Thyroid gland (tissue), 4 donors: ENCODE measurements at regions of chrX and their contacts with region 1.

Region 1: DNA sequence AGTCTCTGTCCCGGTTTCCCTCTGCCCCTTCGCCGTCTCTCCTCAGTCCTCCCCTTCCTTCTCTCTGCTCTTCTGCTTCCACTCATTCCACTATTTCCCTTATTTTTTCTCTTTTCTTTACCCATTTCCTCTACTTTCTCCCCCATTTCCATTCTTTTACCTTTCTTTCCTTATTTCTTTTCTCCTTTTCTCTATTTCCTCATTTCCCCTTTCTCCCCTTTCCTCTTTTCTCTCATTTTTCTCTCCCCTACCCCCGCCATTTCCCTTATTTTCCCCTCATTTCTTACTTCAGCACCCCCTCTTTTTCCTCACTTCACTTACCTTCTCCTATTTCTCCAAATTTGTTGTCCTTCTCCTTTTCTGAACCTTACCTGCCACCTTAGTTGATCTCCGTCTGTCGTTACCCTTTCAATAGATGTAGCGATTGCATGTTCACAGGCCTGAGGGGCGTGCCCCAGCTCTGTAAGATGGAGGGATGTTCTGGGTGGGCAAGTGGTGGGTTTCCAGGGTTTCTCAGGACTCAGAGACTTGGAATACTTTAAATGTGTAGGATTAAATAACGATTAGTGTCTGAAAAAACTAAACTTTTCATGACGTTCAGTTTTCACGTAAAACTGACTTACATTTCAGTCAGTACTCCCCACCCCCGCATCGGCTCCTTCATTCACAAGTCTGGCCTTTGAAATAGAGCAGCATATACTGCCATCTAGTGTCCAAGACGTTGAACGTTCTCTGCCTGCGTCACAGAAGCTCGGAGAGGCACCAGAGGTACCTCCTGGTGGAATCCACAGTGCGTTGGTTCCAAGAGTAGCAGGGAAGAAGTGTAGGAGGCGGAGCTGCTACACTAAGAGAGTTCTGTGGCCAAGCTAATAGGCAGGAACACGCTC is 641 bp upstream of the NCBP2L start:
- DNase-seq: peak; percentile 88 to 91
- H3K4me3 ChIP-seq: peak overlapping the region in 1 of 3 donors; percentile 38
- H3K27ac ChIP-seq: peak overlapping the region; percentile 76 to 90 (median 86)
- H3K4me1 ChIP-seq: peaks cover 0 to 9% of the 10 kb centered on the region in 2 donors
- H3K27me3 ChIP-seq: no peaks in the 10 kb centered on the region
- CTCF ChIP-seq: peak; percentile 30 to 94 (median 72)
- POLR2A ChIP-seq: peak in 1 of 2 donors; percentile 47

Region 2: GRCh38 chrX:107654872-107655761 is 121.8 kb before region 1 on chrX:
- intact Hi-C with region 1: loop called (anchors 5 kb)
- DNase-seq: peak; percentile 80 to 82
- H3K4me3 ChIP-seq: peak overlapping the region in 1 of 3 donors; percentile 9
- H3K27ac ChIP-seq: peak overlapping the region; percentile 64 to 86 (median 84)
- H3K4me1 ChIP-seq: peaks cover 0 to 9% of the 10 kb centered on the region in 2 donors
- H3K27me3 ChIP-seq: no peaks in the 10 kb centered on the region
- CTCF ChIP-seq: peak; percentile 19 to 78 (median 60)
- POLR2A ChIP-seq: peak in 1 of 2 donors; percentile 35

Region 3: GRCh38 chrX:107729547-107730297 is 47.2 kb before region 1 on chrX:
- intact Hi-C with region 1: loop called (anchors 5 kb)
- DNase-seq: peak; percentile 86 to 88
- H3K4me3 ChIP-seq: no peak overlapping the region
- H3K27ac ChIP-seq: peak overlapping the region; percentile 75 to 83 (median 82)
- H3K4me1 ChIP-seq: peaks cover 66 to 86% of the 10 kb centered on the region in 2 donors
- H3K27me3 ChIP-seq: no peaks in the 10 kb centered on the region
- CTCF ChIP-seq: no peak
- POLR2A ChIP-seq: peak in 1 of 2 donors; percentile 36